CD8-positive, alpha-beta memory T cell (primary cell): ENCODE measurements at regions of chr4 and their contacts with region 1.

Region 1: GRCh38 chr4:182478475-182478874 is 235.3 kb downstream of the TENM3 start:
- DNase-seq: peak in 2 of 5 donors; percentile 7 to 13
- H3K4me3 ChIP-seq: no peak overlapping the region
- H3K4me3 Mint-ChIP-seq: no peak overlapping the region
- H3K27ac ChIP-seq: no peak overlapping the region
- H3K27ac Mint-ChIP-seq: no peak overlapping the region
- H3K4me1 ChIP-seq: no peaks in the 10 kb centered on the region
- H3K4me1 Mint-ChIP-seq: no peaks in the 10 kb centered on the region
- H3K27me3 ChIP-seq: no peaks in the 10 kb centered on the region
- H3K27me3 Mint-ChIP-seq: peaks cover 2 to 13% of the 10 kb centered on the region in 2 donors

Region 2: GRCh38 chr4:182495031-182495430 is 16.6 kb after region 1 on chr4:
- CTCF ChIA-PET with region 1: no interaction called
- POLR2A ChIA-PET with region 1: no interaction called
- DNase-seq: no peak
- H3K4me3 ChIP-seq: no peak overlapping the region
- H3K4me3 Mint-ChIP-seq: no peak overlapping the region
- H3K27ac ChIP-seq: no peak overlapping the region
- H3K27ac Mint-ChIP-seq: no peak overlapping the region
- H3K4me1 ChIP-seq: no peaks in the 10 kb centered on the region
- H3K4me1 Mint-ChIP-seq: peaks cover 0 to 16% (median 0%) of the 10 kb centered on the region in 3 donors
- H3K27me3 ChIP-seq: no peaks in the 10 kb centered on the region
- H3K27me3 Mint-ChIP-seq: peaks cover 0 to 26% of the 10 kb centered on the region in 2 donors

Region 3: DNA sequence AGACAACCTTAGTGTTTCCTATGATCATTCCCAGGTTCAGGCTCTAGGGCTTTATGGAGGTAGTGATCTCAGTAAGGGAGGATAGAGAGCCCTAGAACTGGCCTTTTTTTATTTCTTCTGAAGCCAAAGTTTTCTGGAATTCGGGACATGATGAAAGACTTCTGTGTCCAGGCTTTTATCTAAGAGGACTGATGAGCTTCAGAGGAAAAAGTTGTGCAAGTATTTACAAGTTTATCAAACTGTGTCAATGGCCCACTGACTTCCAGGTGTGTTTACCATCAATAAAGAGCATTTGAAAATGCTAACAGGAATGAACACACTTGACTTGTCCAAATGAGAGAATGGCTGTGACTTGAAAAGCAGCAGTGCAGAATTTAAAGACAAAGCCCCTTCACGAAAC is 184.1 kb after region 1 on chr4:
- CTCF ChIA-PET with region 1: no interaction called
- POLR2A ChIA-PET with region 1: no interaction called
- DNase-seq: no peak
- H3K4me3 ChIP-seq: no peak overlapping the region
- H3K4me3 Mint-ChIP-seq: no peak overlapping the region
- H3K27ac ChIP-seq: no peak overlapping the region
- H3K27ac Mint-ChIP-seq: no peak overlapping the region
- H3K4me1 ChIP-seq: no peaks in the 10 kb centered on the region
- H3K4me1 Mint-ChIP-seq: no peaks in the 10 kb centered on the region
- H3K27me3 ChIP-seq: no peaks in the 10 kb centered on the region
- H3K27me3 Mint-ChIP-seq: peaks cover 0 to 3% of the 10 kb centered on the region in 2 donors

Region 4: DNA sequence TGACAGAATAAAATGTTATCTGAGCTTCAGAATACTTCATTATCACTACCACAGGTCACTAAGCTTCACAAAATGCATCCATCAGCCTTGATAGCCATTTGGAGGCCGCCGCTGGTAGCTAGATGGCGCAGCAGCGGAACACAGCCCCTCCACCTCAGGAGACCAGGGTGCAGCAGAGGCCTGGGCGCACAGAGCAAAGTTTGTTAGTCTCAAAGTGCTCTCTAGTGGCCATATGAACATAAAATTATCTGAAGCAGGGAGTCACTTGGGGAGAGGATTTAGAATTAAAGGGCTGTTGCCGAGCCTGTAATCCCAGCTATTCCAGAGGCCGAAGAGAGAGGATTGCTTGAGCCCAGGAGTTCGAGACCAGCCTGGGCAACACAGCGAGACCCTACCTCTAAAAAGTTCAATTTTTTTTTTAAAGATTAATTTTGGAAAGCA is 446.8 kb after region 1 on chr4:
- CTCF ChIA-PET with region 1: interaction called, 10 read pairs
- POLR2A ChIA-PET with region 1: no interaction called
- DNase-seq: peak; percentile 27 to 78 (median 51)
- H3K4me3 ChIP-seq: no peak overlapping the region
- H3K4me3 Mint-ChIP-seq: no peak overlapping the region
- H3K27ac ChIP-seq: no peak overlapping the region
- H3K27ac Mint-ChIP-seq: peak overlapping the region in 2 of 8 donors; percentile 22 to 40
- H3K4me1 ChIP-seq: no peaks in the 10 kb centered on the region
- H3K4me1 Mint-ChIP-seq: no peaks in the 10 kb centered on the region
- H3K27me3 ChIP-seq: no peaks in the 10 kb centered on the region
- H3K27me3 Mint-ChIP-seq: peaks cover 4 to 11% of the 10 kb centered on the region in 2 donors